ENCODE measurements at regions of chr10 and their contacts with region 1.

Region 1: DNA sequence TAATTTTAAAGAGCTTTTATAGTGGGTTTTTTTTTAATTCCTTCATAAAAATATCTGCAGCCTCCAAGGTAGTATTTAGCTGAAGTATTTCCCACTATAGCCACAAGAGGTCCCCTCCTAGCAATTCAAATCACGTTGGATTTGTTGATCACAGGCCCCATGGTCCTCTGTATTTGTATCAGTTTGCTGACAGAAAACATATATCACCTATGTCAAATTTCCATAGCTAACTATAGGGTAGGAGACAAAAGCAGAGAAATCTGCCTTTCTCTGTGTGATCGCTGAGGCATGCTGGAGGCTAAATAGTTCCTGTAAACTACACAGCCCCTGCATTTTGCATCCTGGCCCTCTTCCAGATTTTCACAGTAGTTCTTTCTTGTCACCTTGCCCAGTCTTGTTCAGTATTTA is 1.7 kb upstream of the CTNNA3 start:
- H3K4me3 ChIP-seq: no peak overlapping the region
- H3K27ac ChIP-seq: no peak overlapping the region
- H3K4me1 ChIP-seq: no peaks in the 10 kb centered on the region
- CTCF ChIP-seq: no peak

Region 2: DNA sequence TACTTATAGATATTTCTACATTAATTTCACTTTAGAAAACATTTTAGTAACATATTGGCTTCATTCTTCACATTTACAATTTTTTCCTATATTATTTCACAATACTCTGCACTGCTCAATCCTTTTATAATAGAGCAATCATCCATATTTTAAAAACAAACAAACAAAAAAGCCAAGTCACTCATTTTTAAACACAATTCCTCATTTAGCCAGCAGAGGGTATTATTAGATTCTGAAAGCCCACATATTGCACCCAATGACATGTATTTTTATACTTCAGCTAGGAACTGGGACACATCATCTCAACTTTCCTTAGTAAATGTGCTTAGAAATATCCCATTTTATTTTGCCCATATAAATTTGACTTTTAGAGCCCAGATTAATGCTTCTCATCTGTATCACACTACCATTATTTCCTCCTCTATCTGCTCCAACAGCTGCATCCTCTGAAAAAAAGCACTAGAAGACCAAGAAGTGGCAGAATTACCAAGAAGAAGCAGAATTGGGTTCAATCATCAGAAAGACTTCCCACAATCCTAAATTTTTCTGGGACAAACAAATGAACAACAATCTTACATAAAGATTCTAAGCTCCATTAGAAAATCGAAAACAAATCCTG is 31.2 kb before region 1 on chr10:
- CTCF ChIA-PET with region 1: interaction called, 10 read pairs
- POLR2A ChIA-PET with region 1: no interaction called
- H3K4me3 ChIP-seq: no peak overlapping the region
- H3K27ac ChIP-seq: no peak overlapping the region
- H3K4me1 ChIP-seq: no peaks in the 10 kb centered on the region
- CTCF ChIP-seq: no peak

Region 3: GRCh38 chr10:67676203-67676825 is 21.4 kb before region 1 on chr10:
- CTCF ChIA-PET with region 1: interaction called, 13 read pairs
- POLR2A ChIA-PET with region 1: no interaction called
- H3K4me3 ChIP-seq: no peak overlapping the region
- H3K27ac ChIP-seq: no peak overlapping the region
- H3K4me1 ChIP-seq: no peaks in the 10 kb centered on the region
- CTCF ChIP-seq: no peak

Region 4: DNA sequence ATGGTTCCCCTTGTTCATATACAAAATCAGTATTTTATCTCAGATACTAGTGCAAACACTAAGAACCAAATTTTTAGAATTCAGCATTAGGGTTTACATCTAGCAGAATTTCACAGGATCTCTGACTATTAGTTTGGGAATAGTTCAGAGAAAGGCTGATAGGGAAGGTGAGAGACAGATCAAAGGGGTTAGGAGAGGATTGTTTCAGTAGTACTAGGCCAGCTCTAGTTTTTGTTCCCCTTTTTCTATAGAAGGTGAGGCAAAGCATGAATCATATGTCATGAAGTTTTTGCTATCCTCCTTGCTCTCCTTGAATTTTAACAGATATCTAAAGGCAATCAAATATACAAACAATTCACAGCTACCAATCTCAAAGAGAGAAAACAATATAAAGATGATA is 24.4 kb after region 1 on chr10:
- CTCF ChIA-PET with region 1: interaction called, 10 read pairs
- POLR2A ChIA-PET with region 1: no interaction called
- H3K4me3 ChIP-seq: no peak overlapping the region
- H3K27ac ChIP-seq: no peak overlapping the region
- H3K4me1 ChIP-seq: no peaks in the 10 kb centered on the region
- CTCF ChIP-seq: no peak

Region 5: DNA sequence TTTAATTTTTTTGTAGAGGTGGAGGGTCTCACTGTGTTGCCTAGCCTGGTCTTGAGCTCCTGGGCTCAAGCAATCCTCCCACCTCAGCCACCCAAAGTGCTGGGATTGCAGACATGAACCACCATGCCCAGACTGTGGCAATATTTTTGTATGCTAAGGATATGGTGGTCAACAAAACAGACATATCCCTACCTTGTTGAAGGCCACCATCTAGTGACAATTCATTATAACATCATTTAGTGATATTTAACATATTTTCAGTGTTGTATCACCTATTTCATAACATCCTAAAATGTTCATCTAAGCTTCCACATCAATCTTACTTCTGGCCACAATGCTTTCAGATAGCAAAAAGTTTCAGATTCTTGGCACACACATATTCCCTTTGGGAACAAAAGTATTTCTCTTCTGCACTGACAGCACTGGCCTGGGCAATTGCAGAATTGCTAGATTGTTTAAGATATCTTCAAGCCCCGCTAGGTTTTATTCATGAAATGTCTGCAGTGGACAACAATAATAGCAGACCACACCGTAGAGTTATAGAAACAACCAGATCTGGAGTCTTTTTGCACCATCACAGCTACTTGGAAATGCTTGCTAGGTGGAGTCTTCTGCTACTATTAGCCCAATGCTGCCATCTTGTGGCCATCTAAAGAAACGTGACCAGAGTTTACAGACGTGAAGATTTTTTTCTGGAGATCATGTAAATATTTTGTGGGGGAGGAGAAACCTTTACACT is 81.9 kb after region 1 on chr10:
- CTCF ChIA-PET with region 1: interaction called, 114 read pairs
- POLR2A ChIA-PET with region 1: no interaction called
- H3K4me3 ChIP-seq: no peak overlapping the region
- H3K27ac ChIP-seq: no peak overlapping the region
- H3K4me1 ChIP-seq: no peaks in the 10 kb centered on the region
- CTCF ChIP-seq: peak; percentile 55

Measured in HEK293 (cell line).